ENCODE measurements at regions of chr4 and their contacts with region 1.

Region 1: DNA sequence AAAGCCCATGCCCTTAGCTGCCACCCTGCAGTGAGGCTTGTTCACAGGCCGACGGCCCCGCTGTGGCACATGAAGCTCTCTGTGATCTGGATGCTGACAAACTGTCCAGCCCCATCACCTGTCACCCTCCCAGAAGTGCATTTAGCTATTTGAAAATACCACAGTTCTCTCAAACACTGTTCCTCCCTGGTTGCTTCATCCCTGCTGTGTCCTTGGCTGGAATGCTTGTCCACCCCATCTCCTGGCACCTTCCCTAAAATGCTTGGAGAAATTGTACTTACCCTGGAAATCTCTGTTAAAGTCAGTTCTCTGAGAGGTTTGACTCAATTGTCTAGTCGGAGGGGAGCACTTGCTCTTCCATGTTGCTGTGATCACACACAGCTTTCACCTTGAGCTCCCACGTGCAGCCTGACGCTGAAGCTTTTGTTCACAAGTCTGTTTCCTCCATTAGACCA is 10.1 kb downstream of the SYNPO2 start:
- DNase-seq: no peak
- H3K4me3 ChIP-seq: no peak overlapping the region
- H3K27ac ChIP-seq: no peak overlapping the region
- H3K4me1 ChIP-seq: no peaks in the 10 kb centered on the region
- H3K27me3 ChIP-seq: no peaks in the 10 kb centered on the region
- CTCF ChIP-seq: no peak

Region 2: DNA sequence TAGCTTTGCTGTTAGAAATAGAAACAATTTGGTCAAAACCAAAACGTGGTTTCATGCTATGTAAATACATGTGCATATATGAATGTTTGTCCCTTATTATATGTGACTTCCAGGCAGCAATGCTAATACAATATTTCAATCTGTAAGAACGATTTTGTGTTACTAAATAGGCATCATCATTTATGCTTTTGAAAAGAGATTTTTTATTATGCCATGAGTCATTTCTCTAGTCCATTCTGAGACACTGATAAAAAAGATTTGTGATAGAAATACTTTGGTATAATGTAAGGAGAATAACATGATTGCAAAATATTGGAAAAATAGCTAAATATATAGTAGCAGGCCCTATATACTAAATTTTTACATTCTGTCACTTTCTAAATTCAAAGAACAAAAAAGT is 18.9 kb after region 1 on chr4:
- CTCF ChIA-PET with region 1: no interaction called
- POLR2A ChIA-PET with region 1: no interaction called
- intact Hi-C with region 1: loop called (anchors 1 kb)
- DNase-seq: no peak
- H3K4me3 ChIP-seq: no peak overlapping the region
- H3K27ac ChIP-seq: no peak overlapping the region
- H3K4me1 ChIP-seq: no peaks in the 10 kb centered on the region
- H3K27me3 ChIP-seq: no peaks in the 10 kb centered on the region
- CTCF ChIP-seq: no peak

Measured in A673 (cell line).